ENCODE measurements at regions of chr4 and their contacts with region 1.

Region 1: DNA sequence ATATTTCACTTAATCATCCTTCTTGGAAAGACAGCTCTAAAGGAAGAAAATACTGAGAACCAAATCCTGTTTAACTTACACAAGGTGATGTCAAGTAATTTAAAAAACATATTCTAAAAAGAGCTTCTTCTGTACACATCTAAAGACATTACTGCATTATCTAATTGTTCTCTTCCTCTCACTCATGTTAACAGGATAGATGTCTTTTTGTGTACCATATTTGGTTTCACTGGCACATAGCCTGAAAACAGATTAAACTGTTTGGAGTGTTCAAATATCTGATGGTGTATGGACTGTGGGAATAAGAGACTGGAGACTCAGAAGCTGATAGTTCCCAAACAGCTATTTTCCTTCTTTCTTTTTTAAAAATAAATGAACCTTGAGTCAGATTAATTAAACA is 213.3 kb upstream of the MAB21L2 start:
- DNase-seq: no peak
- H3K4me3 Mint-ChIP-seq: no peak overlapping the region
- H3K27ac Mint-ChIP-seq: no peak overlapping the region
- H3K4me1 Mint-ChIP-seq: no peaks in the 10 kb centered on the region
- H3K27me3 Mint-ChIP-seq: no peaks in the 10 kb centered on the region

Region 2: GRCh38 chr4:150381609-150382008 is 12.9 kb after region 1 on chr4:
- intact Hi-C with region 1: loop called (anchors 2 kb)
- DNase-seq: no peak
- H3K4me3 Mint-ChIP-seq: no peak overlapping the region
- H3K27ac Mint-ChIP-seq: no peak overlapping the region
- H3K4me1 Mint-ChIP-seq: no peaks in the 10 kb centered on the region
- H3K27me3 Mint-ChIP-seq: no peaks in the 10 kb centered on the region

Measured in activated T-helper 1 cell treated with anti-CD3 and anti-CD28 coated beads, Interleukin-12 subunit alpha, Interleukin-12 subunit beta, Interleukin-2, Interleukin-4 antibody, amounts not matched to agents 30 ng/mL and 10 ng/mL and 1 ng/mL, durations not matched to agents 14 hours and 24 hours and 36 hours (primary cell).